Mucosa of descending colon (tissue), 3 donors: ENCODE measurements at regions of chr20 and their contacts with region 1.

Region 1: GRCh38 chr20:32521780-32522525 is 63.2 kb downstream of the NOL4L start:
- DNase-seq: peak; percentile 68 to 80 (median 80)
- ATAC-seq: peak; percentile 88
- H3K4me3 ChIP-seq: no peak overlapping the region
- H3K4me1 ChIP-seq: peaks cover 4% of the 10 kb centered on the region
- CTCF ChIP-seq: peak; percentile 74

Region 2: DNA sequence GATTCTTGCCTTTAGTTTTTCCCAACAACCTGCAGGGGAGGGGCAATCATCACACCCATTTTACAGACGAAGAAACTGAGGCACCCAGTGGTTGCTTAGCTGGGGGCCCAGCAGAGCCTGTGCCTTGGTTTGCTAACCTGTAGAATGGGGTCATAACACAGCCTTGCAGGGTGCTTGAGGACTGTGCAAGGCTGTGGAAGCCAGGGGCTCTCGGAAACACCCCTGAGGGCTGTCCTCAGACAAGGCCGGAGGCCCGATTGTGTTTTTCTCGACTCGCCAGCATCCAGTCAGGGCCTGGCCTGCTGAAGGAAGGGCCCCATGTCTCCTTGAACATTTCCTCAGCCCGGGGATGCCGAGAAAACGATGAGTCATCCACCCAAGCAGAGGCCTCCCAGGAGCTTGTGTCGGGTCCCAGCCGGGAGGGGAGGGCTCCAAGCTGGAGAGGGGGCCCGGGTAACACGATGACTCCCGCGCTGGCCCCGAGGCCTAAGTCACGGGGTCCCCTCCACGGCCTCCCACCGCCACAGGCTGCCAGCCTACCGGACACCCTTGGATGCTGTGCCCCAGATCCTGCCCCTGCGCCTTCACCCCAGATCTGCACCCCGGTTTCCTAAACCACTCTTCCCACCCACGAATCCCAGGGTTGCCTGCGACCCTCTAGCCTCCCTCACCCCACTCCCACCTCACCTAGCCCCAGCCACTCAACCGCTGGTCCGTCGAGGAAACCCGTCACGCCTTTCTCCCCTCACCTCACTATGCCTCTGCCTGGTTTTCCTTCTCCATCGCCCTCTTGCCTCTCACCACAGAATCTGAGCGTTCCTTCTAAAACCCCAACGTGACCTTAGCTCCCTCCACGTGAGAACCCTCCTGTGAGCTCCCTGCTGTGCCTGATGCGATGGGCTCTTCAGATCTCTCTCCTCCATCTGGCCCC is 52.6 kb after region 1 on chr20:
- intact Hi-C with region 1: no loop called
- DNase-seq: no peak
- ATAC-seq: no peak
- H3K4me3 ChIP-seq: no peak overlapping the region
- H3K4me1 ChIP-seq: no peaks in the 10 kb centered on the region
- CTCF ChIP-seq: no peak

Region 3: DNA sequence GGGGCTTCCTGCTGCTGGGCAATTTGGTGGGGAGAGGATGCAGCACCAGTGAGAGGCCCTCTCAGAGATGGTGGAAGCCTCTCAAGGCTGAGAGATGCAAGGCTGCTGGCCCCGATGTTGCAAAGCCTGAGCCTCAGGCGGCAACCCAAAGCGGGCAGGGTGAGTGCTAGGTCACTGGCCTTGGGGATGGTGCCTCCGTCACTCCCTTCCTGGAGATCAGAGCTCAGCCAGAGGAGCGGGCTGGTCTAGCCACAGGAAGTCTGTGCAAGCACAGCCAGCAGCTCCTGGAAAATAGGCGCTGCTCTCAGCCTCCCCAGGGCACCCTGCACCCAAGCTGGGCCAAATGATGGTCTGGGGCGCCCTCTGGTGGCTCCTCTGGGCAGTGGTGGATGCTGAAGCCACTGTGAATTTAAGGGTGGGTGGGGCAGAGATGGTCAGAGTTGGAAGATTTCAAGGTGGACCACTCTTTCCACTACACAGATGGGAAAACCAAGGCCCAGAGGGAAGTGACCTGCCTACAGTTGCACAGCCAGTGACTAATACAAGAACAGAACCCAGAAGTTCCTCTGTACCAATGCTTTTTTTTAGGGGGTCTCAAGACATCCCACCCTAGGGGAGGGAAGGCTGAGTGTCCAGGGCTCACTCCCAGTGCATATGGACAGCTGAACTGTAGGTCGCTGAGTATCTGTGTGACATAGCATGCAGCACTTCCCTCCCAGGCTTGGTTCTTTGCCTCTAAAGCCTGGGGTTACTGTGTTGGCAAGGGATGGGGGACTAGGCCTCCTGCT is 131.0 kb after region 1 on chr20:
- intact Hi-C with region 1: loop called (anchors 2 to 5 kb)
- DNase-seq: peak; percentile 84 to 90 (median 89)
- ATAC-seq: peak; percentile 98
- H3K4me3 ChIP-seq: no peak overlapping the region
- H3K4me1 ChIP-seq: no peaks in the 10 kb centered on the region
- CTCF ChIP-seq: peak; percentile 82